ENCODE measurements at regions of chr16 and their contacts with region 1.

Region 1: DNA sequence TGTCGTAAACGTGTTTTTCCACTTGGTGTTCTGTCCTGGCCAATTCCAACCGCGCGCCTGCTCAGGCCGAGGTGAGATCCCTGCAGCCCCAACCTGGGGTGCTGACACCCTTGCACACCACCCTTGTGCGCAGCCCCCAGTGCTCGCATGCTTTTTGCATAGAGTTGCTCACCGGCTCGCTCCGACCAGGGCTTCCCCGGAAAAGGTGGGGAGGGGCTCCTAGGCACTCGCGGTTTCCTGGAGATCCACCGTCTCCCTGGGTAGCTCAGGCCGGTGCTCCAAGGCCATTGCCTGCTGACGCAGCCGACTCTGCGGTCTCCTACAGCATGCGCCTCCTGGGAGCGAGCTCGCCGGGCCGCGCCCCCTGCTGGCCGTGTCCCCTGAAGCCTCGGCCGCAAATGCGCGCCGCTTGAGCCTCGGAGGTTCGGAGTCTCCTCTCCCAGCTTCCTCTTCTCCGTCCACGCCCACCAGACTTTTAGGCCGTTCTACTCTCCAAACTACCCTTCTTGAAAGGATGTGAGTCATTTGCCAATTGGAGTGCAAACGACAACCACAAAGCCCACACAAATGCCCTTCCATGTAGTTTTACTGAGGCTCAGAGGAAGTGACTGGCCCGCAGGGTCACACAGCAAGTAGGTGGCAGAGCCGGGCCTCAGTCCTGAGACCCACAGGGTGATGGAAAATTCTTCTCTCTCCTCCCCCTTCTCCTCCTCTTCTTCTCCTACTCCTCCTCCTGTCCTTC is 7.2 kb upstream of the PDP2 start:
- DNase-seq: peak; percentile 89
- ATAC-seq: peak; percentile 95
- H3K4me3 ChIP-seq: peak overlapping the region; percentile 42 to 57
- H3K27ac ChIP-seq: peak overlapping the region; percentile 65
- H3K4me1 ChIP-seq: peaks cover 12 to 27% of the 10 kb centered on the region in 2 experiments
- H3K27me3 ChIP-seq: no peaks in the 10 kb centered on the region
- CTCF ChIP-seq: peak; percentile 74 to 95 (median 91)
- POLR2A ChIP-seq: no peak
- RAD21 ChIP-seq: no peak

Region 2: DNA sequence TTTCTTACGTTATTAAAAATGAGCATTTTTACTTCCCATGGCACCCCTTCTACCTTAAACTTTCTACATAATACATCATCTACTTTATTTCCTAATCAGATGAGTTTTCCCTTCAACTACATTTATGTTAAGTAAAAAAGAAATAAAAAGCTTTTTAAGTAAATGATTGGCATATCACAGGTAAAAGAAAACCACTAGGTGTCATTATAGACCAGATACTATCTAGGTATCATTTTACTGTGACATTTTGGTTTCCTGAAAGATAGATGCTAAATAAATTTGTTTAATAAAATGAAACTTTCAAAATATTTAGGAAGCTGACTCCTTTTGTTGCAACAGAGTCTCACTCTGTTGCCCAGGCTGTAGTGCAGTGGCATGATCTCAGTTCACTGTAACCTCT is 310.7 kb before region 1 on chr16:
- CTCF ChIA-PET with region 1: interaction called, 7 read pairs
- POLR2A ChIA-PET with region 1: no interaction called
- RAD21 ChIA-PET with region 1: no interaction called
- intact Hi-C with region 1: loop called (anchors 5 kb)
- DNase-seq: no peak
- ATAC-seq: no peak
- H3K4me3 ChIP-seq: no peak overlapping the region
- H3K27ac ChIP-seq: no peak overlapping the region
- H3K4me1 ChIP-seq: no peaks in the 10 kb centered on the region
- H3K27me3 ChIP-seq: no peaks in the 10 kb centered on the region
- CTCF ChIP-seq: peak in 2 of 3 experiments; percentile 30; a peak in 2 of 6 replicates
- POLR2A ChIP-seq: no peak
- RAD21 ChIP-seq: peak; percentile 54

Region 3: DNA sequence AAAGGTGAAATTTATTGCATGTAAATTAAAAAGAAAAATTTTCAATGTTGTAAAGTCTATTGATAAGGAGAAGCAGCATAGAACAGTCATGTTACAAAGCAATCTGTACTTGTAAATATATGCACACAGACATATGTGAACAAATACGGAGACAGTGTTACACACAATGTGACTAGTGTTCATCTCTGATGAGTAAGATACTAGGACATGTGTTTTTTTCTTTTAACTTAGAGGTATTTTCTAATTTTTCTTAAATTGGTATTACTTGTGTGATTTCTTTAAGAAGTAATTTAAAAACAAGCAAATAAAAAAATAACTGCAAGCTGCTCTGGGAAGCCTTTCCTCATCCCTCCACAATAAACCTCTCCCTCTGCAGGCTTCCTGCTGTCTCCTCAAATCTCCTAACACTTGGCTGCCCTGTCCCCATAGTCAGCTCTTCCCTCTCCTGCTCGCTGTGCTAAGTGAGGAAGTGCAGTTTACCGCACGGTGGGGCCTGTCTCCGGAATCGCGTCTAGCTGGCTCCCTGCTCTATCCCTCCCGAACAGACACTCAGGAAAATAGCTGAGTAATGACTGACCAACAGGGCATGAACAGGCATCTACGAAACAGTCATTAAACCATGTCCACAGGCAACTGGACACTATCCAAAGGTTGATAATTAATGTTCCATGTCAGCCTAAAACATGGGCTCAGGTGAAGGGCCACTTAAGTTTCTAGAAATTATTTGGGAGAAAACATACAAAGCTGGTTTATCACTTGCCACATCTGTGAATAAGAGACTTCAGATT is 212.5 kb before region 1 on chr16:
- CTCF ChIA-PET with region 1: interaction called, 10 read pairs
- POLR2A ChIA-PET with region 1: no interaction called
- RAD21 ChIA-PET with region 1: interaction called in 1 of 2 experiments, 6 read pairs
- intact Hi-C with region 1: no loop called
- DNase-seq: no peak
- ATAC-seq: no peak
- H3K4me3 ChIP-seq: no peak overlapping the region
- H3K27ac ChIP-seq: no peak overlapping the region
- H3K4me1 ChIP-seq: peaks cover 3 to 10% of the 10 kb centered on the region in 2 experiments; a peak in 2 of 4 replicates
- H3K27me3 ChIP-seq: no peaks in the 10 kb centered on the region
- CTCF ChIP-seq: no peak
- POLR2A ChIP-seq: no peak
- RAD21 ChIP-seq: no peak

Region 4: DNA sequence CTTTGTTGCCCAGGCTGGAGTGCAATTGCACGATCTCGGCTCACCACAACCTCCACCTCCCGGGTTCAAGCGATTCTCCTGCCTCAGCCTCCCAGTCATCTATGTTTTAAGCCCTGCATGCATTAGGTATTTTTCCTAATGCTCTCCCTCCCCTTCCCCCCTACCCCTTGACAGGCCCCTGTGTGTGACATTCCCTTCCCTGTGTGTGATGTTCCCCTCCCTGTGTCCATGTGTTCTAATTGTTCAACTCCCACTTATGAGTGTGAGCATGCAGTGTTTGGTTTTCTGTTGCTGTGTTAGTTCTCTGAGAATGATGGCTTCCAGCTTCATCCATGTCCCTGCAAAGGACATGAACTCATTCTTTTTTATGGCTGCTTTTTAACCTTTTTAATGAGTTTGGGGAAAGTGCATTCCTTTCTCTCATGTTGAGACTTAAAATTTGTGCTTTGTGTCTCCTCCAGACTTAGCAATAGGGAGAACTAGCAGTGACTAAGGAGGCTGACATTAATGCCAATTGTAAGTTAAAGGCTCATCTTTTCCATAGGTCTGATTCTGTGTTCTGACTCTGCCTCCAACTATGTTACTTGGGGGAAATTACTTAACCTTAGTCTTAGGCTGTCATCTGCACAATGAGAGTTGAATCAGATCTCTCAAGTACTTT is 218.9 kb after region 1 on chr16:
- CTCF ChIA-PET with region 1: no interaction called
- POLR2A ChIA-PET with region 1: no interaction called
- RAD21 ChIA-PET with region 1: no interaction called
- intact Hi-C with region 1: no loop called
- DNase-seq: no peak
- ATAC-seq: no peak
- H3K4me3 ChIP-seq: no peak overlapping the region
- H3K27ac ChIP-seq: no peak overlapping the region
- H3K4me1 ChIP-seq: no peaks in the 10 kb centered on the region
- H3K27me3 ChIP-seq: no peaks in the 10 kb centered on the region
- CTCF ChIP-seq: no peak
- POLR2A ChIP-seq: no peak
- RAD21 ChIP-seq: no peak

Measured in HCT116 (cell line).